Activated CD4-positive, alpha-beta T cell treated with anti-CD3 and anti-CD28 coated beads for 36 hours (primary cell): ENCODE measurements at regions of chr4 and their contacts with region 1.

Region 1: GRCh38 chr4:186297013-186297645 is 31.1 kb downstream of the F11 start:
- DNase-seq: no peak
- ATAC-seq: no peak
- H3K4me3 Mint-ChIP-seq: no peak overlapping the region
- H3K27ac Mint-ChIP-seq: no peak overlapping the region
- H3K4me1 Mint-ChIP-seq: peaks cover 7% of the 10 kb centered on the region
- H3K27me3 Mint-ChIP-seq: peaks cover 31% of the 10 kb centered on the region

Region 2: GRCh38 chr4:186587416-186588018 is 290.4 kb after region 1 on chr4:
- CTCF ChIA-PET with region 1: interaction called, 22 read pairs
- POLR2A ChIA-PET with region 1: no interaction called
- intact Hi-C with region 1: loop called (anchors 1 kb)
- DNase-seq: peak; percentile 78
- ATAC-seq: no peak
- H3K4me3 Mint-ChIP-seq: no peak overlapping the region
- H3K27ac Mint-ChIP-seq: no peak overlapping the region
- H3K4me1 Mint-ChIP-seq: no peaks in the 10 kb centered on the region
- H3K27me3 Mint-ChIP-seq: no peaks in the 10 kb centered on the region

Region 3: DNA sequence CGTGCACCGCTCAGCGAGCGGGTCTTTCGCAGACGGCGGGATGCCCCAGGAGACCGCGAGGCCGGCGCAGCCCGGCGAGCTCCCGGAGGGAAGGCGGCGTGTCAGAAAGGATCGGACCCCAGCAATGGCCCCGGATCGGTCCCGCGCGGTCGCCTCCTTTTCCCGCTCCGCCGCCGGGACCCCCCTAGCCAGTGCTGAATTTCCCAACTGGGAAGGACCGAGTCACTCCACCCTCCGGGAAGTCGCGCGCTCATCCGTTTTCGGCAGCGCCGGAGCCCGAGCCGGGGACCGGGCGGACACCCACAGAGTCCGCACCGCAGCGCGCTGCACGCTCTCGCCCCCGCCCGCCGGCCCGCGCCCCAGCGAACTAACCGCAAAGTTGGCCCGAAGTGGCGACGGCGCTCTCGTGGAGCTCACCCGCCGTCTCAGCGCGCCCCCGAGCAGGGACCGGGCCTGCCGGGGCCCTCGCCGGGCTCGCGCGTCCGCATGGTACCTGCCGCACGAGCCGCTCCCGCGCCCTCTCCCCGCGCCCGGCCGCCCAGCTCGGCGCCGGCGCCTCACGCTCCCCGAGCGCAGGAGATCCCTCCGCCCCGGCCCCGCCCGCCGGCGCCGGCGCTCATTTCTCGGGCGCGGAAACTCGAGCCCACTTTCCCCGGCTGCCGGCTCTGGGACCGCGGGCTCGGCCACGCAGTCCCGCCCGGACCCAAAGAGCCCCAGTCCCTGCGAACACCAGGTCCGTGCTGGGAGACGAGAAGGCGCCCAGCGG is 426.3 kb after region 1 on chr4 and contains the start of gene FAT1:
- CTCF ChIA-PET with region 1: no interaction called
- POLR2A ChIA-PET with region 1: no interaction called
- intact Hi-C with region 1: loop called in 1 of 2 experiments (anchors 5 kb)
- DNase-seq: peak; percentile 36
- ATAC-seq: no peak
- H3K4me3 Mint-ChIP-seq: peak within 1 kb of the TSS; percentile 49
- H3K27ac Mint-ChIP-seq: no peak within 1 kb of the TSS
- H3K4me1 Mint-ChIP-seq: peaks cover 19% of the 10 kb centered on the region
- H3K27me3 Mint-ChIP-seq: peaks cover 53% of the 10 kb centered on the region
- total RNA-seq, gene FAT1: 0.02 to 0.05 TPM